GM12878 (cell line): ENCODE measurements at regions of chr2 and their contacts with region 1.

Region 1: GRCh38 chr2:152674334-152674733 is 42.9 kb downstream of the PRPF40A start:
- DNase-seq: no peak
- ATAC-seq: no peak
- H3K4me3 ChIP-seq: no peak overlapping the region
- H3K27ac ChIP-seq: no peak overlapping the region
- H3K4me1 ChIP-seq: no peaks in the 10 kb centered on the region
- H3K27me3 ChIP-seq: no peaks in the 10 kb centered on the region
- CTCF ChIP-seq: no peak
- EP300 ChIP-seq: no peak
- POLR2A ChIP-seq: no peak
- RAD21 ChIP-seq: no peak

Region 2: GRCh38 chr2:152657043-152657442 is 17.3 kb before region 1 on chr2:
- CTCF ChIA-PET with region 1: no interaction called
- POLR2A ChIA-PET with region 1: no interaction called
- RAD21 ChIA-PET with region 1: no interaction called
- SMC1A ChIA-PET with region 1: interaction called, 4 read pairs
- in situ Hi-C with region 1: no loop called
- intact Hi-C with region 1: loop called (anchors 2 kb)
- DNase-seq: no peak
- ATAC-seq: peak; percentile 82
- H3K4me3 ChIP-seq: no peak overlapping the region
- H3K27ac ChIP-seq: no peak overlapping the region
- H3K4me1 ChIP-seq: no peaks in the 10 kb centered on the region
- H3K27me3 ChIP-seq: no peaks in the 10 kb centered on the region
- CTCF ChIP-seq: no peak
- EP300 ChIP-seq: no peak
- POLR2A ChIP-seq: no peak
- RAD21 ChIP-seq: no peak